Mammary epithelial cell (primary cell): ENCODE measurements at regions of chr11 and their contacts with region 1.

Region 1: DNA sequence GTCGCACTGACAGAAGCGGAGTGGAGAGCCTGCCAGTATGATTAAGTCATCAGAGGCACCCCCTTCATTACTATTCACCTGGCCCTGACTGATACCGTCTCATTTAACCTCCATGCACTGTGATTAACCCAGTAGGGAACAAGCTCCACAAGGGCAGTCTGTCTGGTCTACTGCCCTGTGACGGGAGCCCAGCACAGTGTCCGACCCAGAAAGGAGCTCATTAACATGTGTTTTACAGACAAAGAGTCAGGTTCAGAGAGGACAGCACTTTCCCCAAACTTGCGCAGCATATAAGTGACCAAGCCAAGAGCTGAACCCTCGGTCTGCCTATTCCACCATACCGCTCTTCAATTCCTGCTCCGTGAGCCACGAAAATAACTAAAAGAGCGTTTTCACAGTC is 129.5 kb downstream of the RRAS2 start:
- DNase-seq: no peak
- H3K4me3 ChIP-seq: no peak overlapping the region
- H3K27ac ChIP-seq: no peak overlapping the region
- H3K4me1 ChIP-seq: no peaks in the 10 kb centered on the region
- H3K27me3 ChIP-seq: peaks cover 2% of the 10 kb centered on the region
- CTCF ChIP-seq: no peak

Region 2: DNA sequence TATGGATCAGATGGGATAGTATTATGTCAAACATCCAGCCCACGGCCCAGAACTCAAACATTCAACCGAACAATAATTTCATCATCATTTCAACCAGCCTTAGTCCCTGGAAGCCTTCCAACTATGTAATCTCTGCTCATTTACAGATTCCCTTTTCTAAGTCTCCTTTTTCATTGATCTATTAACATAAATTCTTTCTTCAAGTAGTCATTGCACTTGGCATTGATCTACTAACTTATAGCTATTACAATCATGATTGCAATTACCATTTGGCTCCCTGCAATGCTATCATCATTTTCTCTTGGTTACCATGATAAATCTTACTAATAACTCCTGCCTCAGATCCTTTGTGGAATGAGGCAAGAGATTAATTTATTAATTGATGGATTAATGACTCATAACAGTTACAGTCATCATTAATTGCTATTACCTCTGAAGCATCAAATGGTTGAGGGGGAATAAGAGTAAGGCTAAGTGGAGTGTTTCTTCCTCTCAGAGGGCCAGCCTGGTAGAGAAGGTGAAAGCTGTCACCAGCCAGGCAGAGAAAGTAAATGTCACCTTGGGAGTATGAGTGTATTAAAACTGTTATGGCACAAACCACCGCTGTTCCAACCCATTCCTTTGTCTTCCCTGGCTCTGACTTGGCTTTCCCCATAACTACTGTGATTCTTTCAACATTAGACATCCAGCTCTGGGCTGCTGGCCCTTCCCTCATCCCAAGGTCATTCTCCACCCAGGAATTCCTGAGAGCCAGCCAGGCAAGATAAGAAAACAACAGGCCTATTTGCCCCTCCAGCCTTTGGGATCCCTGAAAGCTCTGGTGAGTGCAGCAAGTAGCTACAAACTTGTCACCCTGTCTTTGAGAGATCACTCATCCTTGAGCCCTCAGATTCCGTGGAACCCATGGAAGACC is 45.2 kb before region 1 on chr11:
- CTCF ChIA-PET with region 1: no interaction called
- dilution Hi-C with region 1: loop called (anchors 5 kb)
- in situ Hi-C with region 1: no loop called
- intact Hi-C with region 1: no loop called
- DNase-seq: no peak
- H3K4me3 ChIP-seq: no peak overlapping the region
- H3K27ac ChIP-seq: no peak overlapping the region
- H3K4me1 ChIP-seq: no peaks in the 10 kb centered on the region
- H3K27me3 ChIP-seq: peaks cover 2% of the 10 kb centered on the region
- CTCF ChIP-seq: no peak